ENCODE measurements at regions of chr2 and their contacts with region 1.

Region 1: DNA sequence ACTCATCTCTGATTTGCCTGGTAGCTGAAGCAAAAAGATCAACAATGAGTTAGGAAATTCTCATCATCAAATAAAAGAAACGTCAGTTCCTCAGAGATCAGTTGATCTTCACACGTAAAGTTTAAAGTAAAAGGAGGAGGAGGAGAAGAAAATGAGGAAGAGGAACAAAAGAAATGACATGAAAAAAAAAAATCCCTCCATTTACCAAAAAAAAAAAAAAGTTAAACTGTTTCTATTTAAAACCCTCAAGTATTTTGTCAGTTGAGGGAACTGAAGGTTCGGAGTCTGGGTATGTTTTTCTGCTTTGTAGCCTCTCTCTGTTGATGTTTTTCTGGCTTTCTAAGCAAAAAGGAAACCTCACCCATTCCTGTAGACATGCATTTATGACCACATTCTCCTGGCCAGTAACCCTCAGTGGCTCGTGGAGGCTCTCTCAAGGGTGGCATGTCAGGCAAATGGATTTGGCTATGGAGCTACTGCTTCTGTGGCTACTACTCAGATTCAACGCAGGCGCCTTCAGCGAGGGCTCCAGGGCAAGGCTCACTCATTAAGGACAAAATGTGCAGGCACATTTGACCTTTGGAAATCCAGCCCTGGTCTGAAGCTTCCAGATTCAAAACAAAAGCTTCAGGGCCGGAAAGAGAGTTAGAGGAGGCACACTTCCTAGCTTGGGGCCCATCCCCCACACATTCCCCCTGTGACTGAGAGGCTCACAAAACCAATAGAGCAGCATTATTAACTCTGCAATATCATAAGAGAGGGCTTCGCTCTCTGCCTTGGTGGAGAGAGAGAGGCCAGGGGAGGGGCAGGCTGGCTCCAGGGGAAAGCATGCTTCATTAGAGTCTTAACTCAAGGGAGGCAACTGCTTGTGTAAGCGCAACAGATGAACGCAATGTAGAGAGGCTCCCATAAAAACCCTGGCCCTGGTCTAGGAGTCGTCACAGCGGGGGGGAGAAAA is 22.3 kb downstream of the KLF7 start:
- DNase-seq: peak; percentile 78
- H3K4me3 Mint-ChIP-seq: peak overlapping the region; percentile 64
- H3K27ac Mint-ChIP-seq: peak overlapping the region; percentile 92
- H3K4me1 Mint-ChIP-seq: peaks cover 68% of the 10 kb centered on the region
- H3K27me3 Mint-ChIP-seq: no peaks in the 10 kb centered on the region

Region 2: DNA sequence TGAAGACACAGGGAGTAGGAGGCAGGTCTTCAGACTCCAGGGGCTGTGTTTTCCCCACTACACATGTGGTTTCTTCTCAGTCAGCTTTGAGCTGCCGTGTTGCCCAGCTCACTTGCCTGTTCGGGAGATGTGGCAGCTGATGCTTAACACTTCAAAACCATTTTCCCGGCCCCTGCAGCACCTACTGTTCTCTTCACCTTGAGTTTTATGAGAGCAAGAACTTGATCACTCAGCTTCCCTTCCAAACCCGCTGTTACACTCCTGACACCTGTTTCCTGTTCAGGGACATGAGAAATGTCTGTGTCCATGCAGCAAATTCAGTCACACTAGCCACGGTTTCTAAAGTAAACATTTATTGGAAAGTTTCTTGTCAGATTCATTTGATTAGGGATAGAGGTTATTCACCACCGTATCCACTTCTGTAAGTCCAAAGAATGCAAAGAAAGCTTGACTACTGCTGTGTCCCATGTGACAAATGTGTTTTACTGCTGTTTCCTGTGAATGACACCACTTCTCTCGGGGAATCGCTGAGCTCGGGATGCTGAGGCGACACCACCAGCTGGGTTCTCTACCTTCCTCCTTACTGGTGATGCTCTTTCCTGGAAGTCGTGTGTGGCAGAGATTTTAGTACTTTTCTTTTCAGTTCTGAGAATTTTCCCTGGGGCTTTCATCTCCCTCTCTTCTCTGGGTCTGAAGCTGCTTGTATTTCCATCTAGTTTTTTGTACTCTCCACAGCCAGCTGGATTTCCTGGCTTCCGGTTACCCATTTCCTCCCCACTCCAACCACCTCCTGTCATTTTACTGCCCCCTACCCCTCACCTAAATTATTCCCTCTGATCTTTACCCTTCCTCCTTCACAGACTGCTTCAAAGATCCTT is 69.5 kb before region 1 on chr2:
- CTCF ChIA-PET with region 1: interaction called, 6 read pairs
- intact Hi-C with region 1: loop called (anchors 5 kb)
- DNase-seq: peak; percentile 72
- H3K4me3 Mint-ChIP-seq: peak overlapping the region; percentile 64
- H3K27ac Mint-ChIP-seq: peak overlapping the region; percentile 85
- H3K4me1 Mint-ChIP-seq: peaks cover 27% of the 10 kb centered on the region
- H3K27me3 Mint-ChIP-seq: no peaks in the 10 kb centered on the region

Region 3: DNA sequence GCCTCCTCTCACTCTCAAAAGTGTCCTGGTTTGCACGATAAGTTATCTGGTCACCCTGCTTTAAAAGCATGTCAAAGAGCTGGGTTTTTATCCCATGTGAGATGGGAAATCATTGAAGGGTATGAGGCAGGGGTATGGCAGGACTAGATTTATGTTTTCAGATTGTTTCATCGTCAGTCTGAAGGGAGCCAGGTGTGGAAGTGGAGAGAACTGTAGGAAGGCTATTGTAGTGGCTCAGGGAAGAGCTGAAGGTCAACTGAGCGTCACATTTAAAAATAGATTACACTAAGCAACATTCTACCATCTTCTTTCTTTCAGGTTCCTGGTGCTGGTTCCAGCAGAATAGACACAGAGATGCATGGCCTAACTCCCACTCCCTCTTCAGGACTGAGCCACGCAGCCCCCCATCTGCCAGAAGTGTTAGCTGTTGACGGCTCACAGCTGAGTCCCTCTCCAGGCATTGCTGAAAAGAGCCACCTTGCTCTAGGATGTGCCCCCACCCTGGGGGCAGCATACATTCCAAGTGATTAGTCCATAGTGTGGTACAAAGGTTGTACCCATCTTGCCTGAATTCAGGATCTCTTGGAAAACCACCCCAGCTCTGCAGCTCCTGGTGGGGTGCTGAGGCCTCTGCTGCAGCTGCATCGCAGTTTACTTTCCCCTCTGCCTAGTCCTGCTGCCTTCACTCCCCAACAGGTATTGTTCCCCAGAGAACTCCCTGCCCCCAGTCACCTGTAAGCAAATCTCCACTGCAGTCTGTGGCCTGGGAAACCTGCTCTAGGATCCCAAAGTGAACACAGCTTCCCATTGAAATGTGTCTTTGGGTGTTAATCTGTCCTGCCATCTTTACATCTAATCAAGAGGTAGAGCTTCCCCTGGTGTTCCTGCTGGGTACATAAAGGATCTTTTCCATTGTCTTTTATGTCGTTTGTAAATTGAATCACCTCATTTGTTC is 101.8 kb after region 1 on chr2:
- CTCF ChIA-PET with region 1: no interaction called
- intact Hi-C with region 1: no loop called
- DNase-seq: no peak
- H3K4me3 Mint-ChIP-seq: no peak overlapping the region
- H3K27ac Mint-ChIP-seq: no peak overlapping the region
- H3K4me1 Mint-ChIP-seq: peaks cover 13% of the 10 kb centered on the region
- H3K27me3 Mint-ChIP-seq: no peaks in the 10 kb centered on the region

Measured in activated naive CD4-positive, alpha-beta T cell treated with anti-CD3 and anti-CD28 coated beads for 36 hours (primary cell).